ENCODE measurements at regions of chr6 and their contacts with region 1.

Region 1: DNA sequence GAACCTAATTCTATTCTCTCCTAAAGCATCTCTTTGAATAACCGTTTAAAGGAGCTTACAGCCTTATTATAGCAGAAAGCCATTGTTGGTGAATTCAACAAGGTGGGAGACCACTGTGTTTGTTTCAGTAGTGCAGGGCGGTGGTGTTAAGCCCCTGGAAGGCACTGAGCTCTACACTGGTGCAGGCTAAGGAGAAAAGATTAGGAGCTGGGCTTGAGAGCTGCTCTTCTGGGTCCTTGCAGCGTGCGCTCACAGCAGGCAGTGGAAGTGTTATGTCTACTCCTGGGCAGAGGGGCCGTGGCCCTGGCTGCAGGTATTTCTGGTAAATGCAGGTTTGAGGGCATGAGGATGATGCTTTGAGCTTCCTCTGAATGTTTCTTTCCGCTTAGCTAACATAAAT is 361.2 kb downstream of the RNF144B start:
- DNase-seq: no peak
- H3K4me3 ChIP-seq: no peak overlapping the region
- H3K27ac ChIP-seq: no peak overlapping the region
- H3K27me3 ChIP-seq: peaks cover 0 to 9% (median 0%) of the 10 kb centered on the region in 45 donors
- CTCF ChIP-seq: no peak

Region 2: DNA sequence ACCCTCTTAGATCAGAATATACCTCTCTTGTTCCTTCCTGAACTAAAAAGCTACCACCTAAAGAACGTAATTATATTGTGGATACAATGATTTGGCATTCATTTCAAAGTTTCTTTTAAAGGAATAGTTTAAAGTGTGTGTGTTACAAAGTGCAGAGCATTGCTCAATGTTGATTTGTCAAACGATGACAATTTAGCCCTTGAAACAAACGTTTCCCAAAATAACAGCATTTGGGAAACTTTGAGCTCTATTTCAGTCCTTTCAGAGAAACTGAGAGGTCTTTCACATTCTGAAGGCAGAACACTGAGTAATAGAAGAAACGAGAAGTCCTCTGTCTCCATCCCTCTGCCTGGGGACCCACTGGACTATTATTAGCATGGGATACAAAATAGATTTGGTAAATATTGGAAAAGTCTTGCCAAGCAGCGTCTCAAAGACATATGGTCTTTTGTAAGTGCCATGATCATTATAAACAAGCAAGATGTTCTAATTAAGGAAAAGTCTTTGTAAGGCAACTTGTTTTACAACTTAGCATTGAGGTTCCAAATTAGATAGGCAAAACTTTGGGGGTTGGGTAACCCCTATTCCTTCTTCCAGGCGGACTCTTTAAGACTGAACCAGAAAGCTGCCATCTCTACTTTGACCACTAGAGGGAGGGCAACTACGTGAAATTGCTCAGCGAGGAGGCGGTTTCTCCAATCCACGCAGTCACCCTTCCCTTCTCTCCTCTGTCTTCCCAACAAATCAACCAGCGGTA is 152.4 kb before region 1 on chr6:
- intact Hi-C with region 1: loop called in 1 of 2 experiments (anchors 5 kb)
- DNase-seq: peak in 8 of 10 donors; percentile 46 to 80 (median 58)
- H3K4me3 ChIP-seq: peak overlapping the region in 5 of 59 donors; percentile 6 to 38 (median 9)
- H3K27ac ChIP-seq: peak overlapping the region in 12 of 59 donors; percentile 2 to 57 (median 26)
- H3K27me3 ChIP-seq: no peaks in the 10 kb centered on the region
- CTCF ChIP-seq: peak; percentile 82 to 99 (median 96)

Region 3: GRCh38 chr6:18663011-18663410 is 85.3 kb before region 1 on chr6:
- intact Hi-C with region 1: no loop called
- DNase-seq: no peak
- H3K4me3 ChIP-seq: no peak overlapping the region
- H3K27ac ChIP-seq: no peak overlapping the region
- H3K27me3 ChIP-seq: peaks cover 0 to 5% (median 0%) of the 10 kb centered on the region in 45 donors
- CTCF ChIP-seq: no peak

Region 4: GRCh38 chr6:19210849-19211590 is 462.7 kb after region 1 on chr6:
- intact Hi-C with region 1: loop called in 1 of 2 experiments (anchors 5 kb)
- DNase-seq: peak in 3 of 10 donors; percentile 16 to 35 (median 25)
- H3K4me3 ChIP-seq: no peak overlapping the region
- H3K27ac ChIP-seq: no peak overlapping the region
- H3K27me3 ChIP-seq: no peaks in the 10 kb centered on the region
- CTCF ChIP-seq: peak in 51 of 56 donors; percentile 9 to 67 (median 48)